Vagina (tissue), 2 donors: ENCODE measurements at regions of chr14 and their contacts with region 1.

Region 1: GRCh38 chr14:32252030-32252670 is 49.1 kb upstream of the RNU6-8 start:
- DNase-seq: no peak
- H3K4me3 ChIP-seq: no peak overlapping the region
- H3K27ac ChIP-seq: no peak overlapping the region
- H3K4me1 ChIP-seq: peaks cover 6% of the 10 kb centered on the region
- H3K27me3 ChIP-seq: no peaks in the 10 kb centered on the region
- CTCF ChIP-seq: peak; percentile 49 to 77 (median 62)
- POLR2A ChIP-seq: no peak

Region 2: DNA sequence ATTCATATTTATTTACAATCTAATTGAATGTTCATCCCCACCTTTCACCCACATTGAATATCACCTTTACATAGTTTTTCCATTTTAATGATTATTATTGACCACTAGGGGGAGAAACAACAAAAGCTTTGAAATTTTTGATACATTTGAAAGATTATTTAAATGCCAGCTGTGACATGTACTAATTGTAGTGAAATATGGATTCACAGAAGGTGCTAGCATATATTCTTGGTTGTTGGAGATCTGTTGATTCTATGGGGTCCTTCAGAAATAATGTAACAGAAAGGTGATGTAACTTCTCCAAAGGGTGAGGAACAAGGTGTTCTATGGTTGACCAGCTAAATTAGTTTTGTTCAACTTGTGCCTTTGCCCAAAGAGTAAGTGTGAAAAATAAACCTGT is 741.9 kb before region 1 on chr14:
- intact Hi-C with region 1: loop called (anchors 5 kb)
- DNase-seq: no peak
- H3K4me3 ChIP-seq: no peak overlapping the region
- H3K27ac ChIP-seq: no peak overlapping the region
- H3K4me1 ChIP-seq: no peaks in the 10 kb centered on the region
- H3K27me3 ChIP-seq: no peaks in the 10 kb centered on the region
- CTCF ChIP-seq: peak; percentile 47 to 53 (median 50)
- POLR2A ChIP-seq: no peak

Region 3: DNA sequence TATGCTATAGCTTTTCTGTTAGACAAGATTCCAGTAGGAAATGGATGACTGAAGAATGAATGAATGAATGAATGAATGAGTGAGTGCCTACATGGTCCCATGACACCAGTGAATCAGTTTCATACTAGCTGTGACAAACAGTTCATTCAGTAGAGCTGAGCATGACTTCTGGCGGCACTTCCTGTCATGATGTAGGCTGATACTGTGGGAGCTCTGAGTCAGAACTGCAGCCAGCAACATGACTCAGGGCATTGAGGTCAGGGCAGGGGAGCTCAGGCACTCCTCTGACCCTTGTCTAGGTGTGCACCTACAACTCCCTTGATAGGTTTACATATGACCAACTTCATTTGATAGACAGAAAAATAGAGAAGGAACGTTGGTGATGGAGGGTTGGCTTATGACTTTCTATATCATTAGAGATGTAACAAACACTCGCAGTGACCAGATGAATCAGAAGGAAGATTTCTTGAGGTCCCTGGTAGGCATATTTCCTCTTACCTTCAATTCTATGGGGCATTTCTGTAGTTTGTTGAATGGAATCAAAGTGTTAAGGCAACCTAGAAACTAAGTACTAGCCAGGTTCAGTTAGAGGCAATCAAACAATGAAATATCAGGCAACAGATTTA is 314.3 kb before region 1 on chr14:
- intact Hi-C with region 1: loop called (anchors 10 kb)
- DNase-seq: no peak
- H3K4me3 ChIP-seq: no peak overlapping the region
- H3K27ac ChIP-seq: no peak overlapping the region
- H3K4me1 ChIP-seq: no peaks in the 10 kb centered on the region
- H3K27me3 ChIP-seq: no peaks in the 10 kb centered on the region
- CTCF ChIP-seq: no peak
- POLR2A ChIP-seq: no peak

Region 4: DNA sequence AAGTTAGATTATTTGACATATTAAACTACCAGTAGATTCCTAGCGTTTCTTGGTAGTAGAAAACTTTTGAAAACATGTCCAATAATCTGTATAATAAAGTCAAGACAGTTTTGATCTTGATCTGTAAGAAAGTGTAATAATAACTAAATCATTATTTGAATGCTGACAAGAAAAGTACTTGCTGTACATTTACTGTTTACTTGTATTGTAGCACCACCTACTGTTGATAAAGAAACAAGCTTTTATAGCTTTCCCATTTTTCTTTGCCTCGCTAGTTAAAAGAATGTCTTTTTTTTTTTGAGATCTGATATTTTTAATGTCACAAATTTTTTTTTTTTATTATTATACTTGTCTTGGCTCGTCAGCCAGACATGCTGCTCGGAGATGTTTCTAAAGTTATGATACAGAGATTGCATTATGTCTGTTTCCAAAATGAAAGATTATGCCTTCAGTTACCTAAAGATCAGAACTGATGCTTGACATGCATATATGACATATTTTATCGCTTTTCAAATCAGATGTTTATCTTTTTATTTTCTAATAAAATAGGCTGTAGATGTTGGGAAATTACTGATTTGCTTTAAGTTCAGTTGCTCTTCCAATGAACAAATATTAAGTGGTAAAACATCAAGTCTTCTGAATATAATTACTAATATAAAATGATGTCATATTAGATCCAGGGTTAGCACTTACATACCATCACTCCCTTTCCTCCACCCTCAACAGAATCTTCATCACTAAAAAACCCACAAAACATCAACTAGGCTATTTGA is 217.4 kb after region 1 on chr14:
- intact Hi-C with region 1: loop called (anchors 10 kb)
- DNase-seq: no peak
- H3K4me3 ChIP-seq: no peak overlapping the region
- H3K27ac ChIP-seq: no peak overlapping the region
- H3K4me1 ChIP-seq: peaks cover 21% of the 10 kb centered on the region
- H3K27me3 ChIP-seq: no peaks in the 10 kb centered on the region
- CTCF ChIP-seq: peak; percentile 40 to 57 (median 46)
- POLR2A ChIP-seq: no peak